Ovary (tissue), 10 donors: ENCODE measurements at regions of chr6 and their contacts with region 1.

Region 1: DNA sequence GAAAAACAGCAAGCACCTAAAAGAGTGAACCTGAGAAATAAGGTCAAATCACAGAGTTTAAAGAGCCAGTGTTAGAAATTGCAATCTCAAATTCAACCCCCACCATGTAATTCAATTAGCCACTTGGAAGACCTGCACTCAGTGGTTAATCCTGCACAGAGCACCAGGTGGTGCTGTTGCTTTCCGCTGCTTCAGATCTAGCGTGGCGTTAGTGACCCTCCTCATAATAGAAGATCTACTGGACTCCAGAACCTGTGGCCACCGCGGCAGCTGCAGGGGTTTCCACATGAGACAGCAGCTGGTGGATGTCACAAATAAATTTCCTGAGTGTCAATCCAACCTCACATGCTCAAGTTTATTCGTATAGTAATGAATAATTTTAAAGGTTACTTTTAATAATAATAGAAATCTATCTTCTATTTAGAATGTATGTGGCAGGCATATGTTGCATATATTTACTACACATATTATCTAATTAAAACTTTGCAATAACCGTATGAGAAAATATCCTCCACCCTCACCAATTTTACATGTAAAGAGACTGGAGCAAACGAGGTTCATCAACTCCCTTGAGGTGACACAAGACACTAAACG is 84.4 kb downstream of the SYNE1 start:
- DNase-seq: peak; percentile 63 to 84 (median 79)
- H3K4me3 ChIP-seq: no peak overlapping the region
- H3K27ac ChIP-seq: no peak overlapping the region
- H3K4me1 ChIP-seq: no peaks in the 10 kb centered on the region
- H3K27me3 ChIP-seq: no peaks in the 10 kb centered on the region
- CTCF ChIP-seq: peak; percentile 77 to 88 (median 83)
- EP300 ChIP-seq: no peak
- POLR2A ChIP-seq: no peak

Region 2: GRCh38 chr6:152124429-152125074 is 428.2 kb before region 1 on chr6:
- intact Hi-C with region 1: no loop called
- DNase-seq: no peak
- H3K4me3 ChIP-seq: no peak overlapping the region
- H3K27ac ChIP-seq: no peak overlapping the region
- H3K4me1 ChIP-seq: peaks cover 8% of the 10 kb centered on the region
- H3K27me3 ChIP-seq: no peaks in the 10 kb centered on the region
- CTCF ChIP-seq: peak; percentile 53 to 86 (median 69)
- EP300 ChIP-seq: no peak
- POLR2A ChIP-seq: no peak

Region 3: GRCh38 chr6:152636609-152637295 is 84.0 kb after region 1 on chr6:
- intact Hi-C with region 1: loop called in 1 of 4 experiments (anchors 10 kb)
- DNase-seq: peak; percentile 64 to 79 (median 73)
- H3K4me3 ChIP-seq: peak overlapping the region; percentile 84
- H3K27ac ChIP-seq: peak overlapping the region; percentile 71 to 80
- H3K4me1 ChIP-seq: peaks cover 1% of the 10 kb centered on the region
- H3K27me3 ChIP-seq: no peaks in the 10 kb centered on the region
- CTCF ChIP-seq: no peak
- EP300 ChIP-seq: no peak
- POLR2A ChIP-seq: no peak

Region 4: GRCh38 chr6:152642989-152643388 is 90.3 kb after region 1 on chr6:
- intact Hi-C with region 1: loop called in 2 of 4 experiments (anchors 2 to 10 kb)
- DNase-seq: peak; percentile 60 to 76 (median 71)
- H3K4me3 ChIP-seq: no peak overlapping the region
- H3K27ac ChIP-seq: no peak overlapping the region
- H3K4me1 ChIP-seq: no peaks in the 10 kb centered on the region
- H3K27me3 ChIP-seq: no peaks in the 10 kb centered on the region
- CTCF ChIP-seq: peak in 1 of 3 donors; percentile 25
- EP300 ChIP-seq: no peak
- POLR2A ChIP-seq: no peak

Region 5: DNA sequence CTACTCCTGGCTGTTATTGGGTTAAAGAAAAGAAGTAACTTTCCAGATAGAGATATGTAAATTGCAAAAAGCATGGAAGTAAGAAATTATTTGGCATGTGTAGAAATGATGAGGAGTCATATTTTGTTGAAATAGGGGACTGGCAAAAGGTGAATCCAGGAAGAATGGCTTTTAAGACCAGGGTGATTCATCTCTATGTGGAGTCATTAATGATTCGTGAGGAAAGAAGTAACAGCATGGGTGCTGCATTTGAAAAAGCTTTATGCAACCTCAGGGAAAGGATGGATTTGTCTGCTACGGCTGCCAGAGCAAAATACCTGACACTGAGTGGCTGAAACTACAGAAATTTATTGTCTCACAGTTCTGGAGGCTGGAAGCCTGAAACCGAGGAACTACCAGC is 99.3 kb after region 1 on chr6:
- intact Hi-C with region 1: loop called in 1 of 4 experiments (anchors 5 kb)
- DNase-seq: no peak
- H3K4me3 ChIP-seq: no peak overlapping the region
- H3K27ac ChIP-seq: no peak overlapping the region
- H3K4me1 ChIP-seq: no peaks in the 10 kb centered on the region
- H3K27me3 ChIP-seq: no peaks in the 10 kb centered on the region
- CTCF ChIP-seq: no peak
- EP300 ChIP-seq: no peak
- POLR2A ChIP-seq: no peak

Region 6: DNA sequence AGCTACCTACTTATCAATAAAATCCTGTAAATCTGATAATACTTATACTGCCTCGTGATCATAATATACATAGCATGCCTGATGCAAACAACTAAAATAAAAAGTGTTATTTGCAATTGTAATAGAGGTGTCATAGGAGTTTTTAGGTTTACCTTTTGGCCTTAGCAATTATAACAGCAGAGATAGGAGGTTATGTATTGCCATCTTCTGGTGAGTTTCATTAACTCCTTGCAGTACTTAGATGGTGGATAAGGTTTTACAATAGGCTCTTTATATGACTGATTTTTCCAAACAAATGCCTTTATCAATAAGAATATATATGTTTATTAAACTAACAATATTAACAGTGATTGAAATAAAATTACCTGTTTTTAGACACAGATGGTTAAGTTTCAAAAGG is 117.2 kb after region 1 on chr6:
- intact Hi-C with region 1: loop called in 2 of 4 experiments (anchors 5 kb)
- DNase-seq: no peak
- H3K4me3 ChIP-seq: no peak overlapping the region
- H3K27ac ChIP-seq: no peak overlapping the region
- H3K4me1 ChIP-seq: no peaks in the 10 kb centered on the region
- H3K27me3 ChIP-seq: no peaks in the 10 kb centered on the region
- CTCF ChIP-seq: peak; percentile 18 to 70 (median 43)
- EP300 ChIP-seq: no peak
- POLR2A ChIP-seq: no peak